HAP-1 (cell line): ENCODE measurements at regions of chr11 and their contacts with region 1.

Region 1: DNA sequence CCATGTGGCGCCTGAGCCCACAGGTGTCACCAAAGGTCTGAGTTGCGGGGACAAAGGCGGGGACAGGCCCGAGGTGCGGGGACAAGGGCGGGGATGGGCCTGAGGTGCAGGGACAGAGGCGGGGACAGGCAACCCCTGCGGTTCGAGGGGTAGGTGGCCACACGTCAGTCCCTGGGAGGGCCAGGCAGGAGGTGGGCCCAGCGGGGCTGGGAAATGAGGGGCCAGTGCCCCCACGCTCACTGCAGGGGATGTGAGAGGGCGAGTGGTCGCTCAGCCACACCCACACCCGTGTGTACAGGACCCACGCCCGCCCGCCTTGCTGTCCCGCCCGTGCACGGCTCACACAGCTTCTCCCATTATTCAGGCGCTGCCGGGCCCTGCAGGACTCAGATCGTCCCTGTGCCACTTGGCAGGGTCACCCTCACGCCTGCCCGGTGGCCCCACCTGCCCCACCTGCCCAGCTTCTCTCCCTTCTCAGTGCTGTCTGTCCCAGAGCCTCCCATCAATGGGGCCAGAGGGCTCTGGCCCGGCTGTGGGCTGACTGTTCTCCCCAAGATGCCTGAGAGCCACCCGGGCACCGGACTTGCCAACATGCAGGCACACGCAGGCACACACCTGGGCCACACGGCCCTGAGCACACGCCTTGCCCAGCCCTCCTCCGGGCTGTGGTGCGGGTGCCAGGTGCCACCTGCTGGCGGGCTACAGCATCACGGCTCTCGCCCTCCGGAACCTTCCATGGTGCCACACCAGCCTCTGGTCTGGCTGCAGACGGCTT is 14.2 kb upstream of the MUC6 start:
- DNase-seq: peak; percentile 63 to 82
- H3K4me3 ChIP-seq: no peak overlapping the region
- H3K4me1 ChIP-seq: no peaks in the 10 kb centered on the region
- H3K27me3 ChIP-seq: peaks cover 35% of the 10 kb centered on the region

Region 2: DNA sequence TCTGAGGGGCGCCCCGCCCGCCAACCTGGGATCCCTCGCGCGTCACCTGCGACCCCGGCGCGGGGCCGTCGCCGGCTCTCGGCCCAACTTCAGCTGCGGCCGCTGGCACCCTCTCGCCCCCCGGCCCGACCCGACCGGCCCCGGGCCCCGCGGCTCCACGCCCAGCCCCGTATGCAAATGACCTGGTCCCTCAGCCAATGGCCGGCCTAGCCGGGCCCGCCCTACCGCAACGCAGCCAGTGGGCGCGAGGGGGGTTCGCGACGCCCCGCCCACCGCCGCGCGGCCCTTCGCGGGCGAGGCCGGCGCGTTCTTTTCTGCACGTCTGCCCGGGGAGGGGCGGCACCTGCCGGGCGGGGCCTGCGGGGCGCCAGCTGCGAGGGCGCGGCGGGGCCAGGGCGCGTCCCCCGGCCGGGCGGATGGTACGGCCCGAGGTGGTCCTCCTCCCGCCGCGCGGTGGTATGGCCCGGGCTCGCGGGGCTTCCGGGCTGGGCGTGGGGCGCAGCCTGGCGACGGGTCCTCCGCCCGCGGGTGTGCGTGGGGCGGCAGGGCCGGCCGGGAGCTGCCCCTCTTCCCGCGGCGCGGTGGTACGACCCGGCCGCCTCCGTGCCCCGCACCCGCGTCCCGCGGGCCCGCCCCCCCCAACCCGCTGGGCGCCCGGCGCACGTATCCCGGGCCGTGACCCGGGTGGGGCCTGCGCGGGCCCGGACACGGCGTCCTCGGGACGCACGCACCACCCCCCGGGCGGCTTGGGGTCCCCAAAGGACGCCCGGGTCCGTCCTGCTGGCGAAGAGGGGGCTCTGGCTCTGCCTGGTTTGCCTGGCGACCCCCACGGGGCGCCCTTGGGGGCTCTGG is 482.2 kb before region 1 on chr11:
- in situ Hi-C with region 1: no loop called
- DNase-seq: peak; percentile 93 to 96
- H3K4me3 ChIP-seq: peak overlapping the region; percentile 48
- H3K4me1 ChIP-seq: peaks cover 10% of the 10 kb centered on the region
- H3K27me3 ChIP-seq: no peaks in the 10 kb centered on the region

Region 3: GRCh38 chr11:859509-860131 is 191.1 kb before region 1 on chr11:
- in situ Hi-C with region 1: loop called (anchors 10 kb)
- DNase-seq: peak in 1 of 2 experiments; percentile 78
- H3K4me3 ChIP-seq: no peak overlapping the region
- H3K4me1 ChIP-seq: peaks cover 23% of the 10 kb centered on the region
- H3K27me3 ChIP-seq: no peaks in the 10 kb centered on the region

Region 4: GRCh38 chr11:2699531-2700414 is 1649.0 kb after region 1 on chr11 and contains the start of gene KCNQ1OT1:
- in situ Hi-C with region 1: no loop called
- DNase-seq: no peak
- H3K4me3 ChIP-seq: no peak within 1 kb of the TSS
- H3K4me1 ChIP-seq: no peaks in the 10 kb centered on the region
- H3K27me3 ChIP-seq: no peaks in the 10 kb centered on the region